ENCODE measurements at regions of chr14 and their contacts with region 1.

Region 1: GRCh38 chr14:61547186-61548086 is 147.9 kb upstream of the HIF1A start:
- DNase-seq: no peak

Region 2: GRCh38 chr14:61420326-61420725 is 127.1 kb before region 1 on chr14:
- intact Hi-C with region 1: no loop called
- DNase-seq: no peak

Region 3: GRCh38 chr14:61475316-61475715 is 72.1 kb before region 1 on chr14:
- intact Hi-C with region 1: loop called in 1 of 2 experiments (anchors 10 kb)
- DNase-seq: no peak

Region 4: DNA sequence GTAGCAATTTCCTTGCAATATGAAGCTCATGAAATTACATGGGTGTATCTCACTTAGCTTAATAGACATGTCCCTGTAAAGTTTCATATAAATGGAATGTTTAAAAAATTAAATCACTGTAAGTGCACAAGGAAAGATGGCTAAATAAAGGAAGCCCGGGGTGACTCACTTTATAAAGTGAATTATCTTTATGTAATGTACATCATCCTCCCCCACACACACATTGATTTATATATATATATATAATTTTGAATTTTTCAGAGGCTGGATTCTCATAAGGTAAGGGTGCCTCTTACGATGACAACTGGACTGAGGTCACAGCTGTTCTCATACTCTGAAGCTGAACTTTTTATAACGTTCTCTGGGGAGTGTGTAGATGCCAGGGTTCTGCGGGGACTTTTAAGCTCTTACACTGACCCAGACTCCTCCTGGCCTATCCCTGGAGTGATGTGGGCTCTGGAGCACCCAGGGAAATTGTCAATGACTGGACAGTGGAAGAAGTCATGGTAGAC is 39.2 kb after region 1 on chr14:
- intact Hi-C with region 1: loop called in 1 of 2 experiments (anchors 1 kb)
- DNase-seq: no peak

Region 5: GRCh38 chr14:61694830-61695694 is 147.6 kb after region 1 on chr14 and contains the start of gene HIF1A:
- intact Hi-C with region 1: loop called in 1 of 2 experiments (anchors 10 kb)
- DNase-seq: peak; percentile 99
- total RNA-seq, gene HIF1A: 131 to 187 TPM